Head of caudate nucleus (tissue), 42 donors: ENCODE measurements at regions of chr21 and their contacts with region 1.

Region 1: GRCh38 chr21:33915368-33916199 is at the start of gene ATP5PO:
- DNase-seq: peak; percentile 95 to 99 (median 98)

Region 2: GRCh38 chr21:33641336-33642026 is 274.1 kb before region 1 on chr21 and contains the start of gene CRYZL1:
- intact Hi-C with region 1: loop called (anchors 10 kb)
- DNase-seq: peak; percentile 100

Region 3: GRCh38 chr21:33968080-33968994 is 52.8 kb after region 1 on chr21:
- intact Hi-C with region 1: no loop called
- DNase-seq: peak in 2 of 42 donors; percentile 14 to 36